Calu3 (cell line): ENCODE measurements at regions of chr21 and their contacts with region 1.

Region 1: GRCh38 chr21:14877570-14878228 is 187.1 kb downstream of the NRIP1 start:
- DNase-seq: peak; percentile 29
- H3K4me3 Mint-ChIP-seq: no peak overlapping the region
- H3K27ac Mint-ChIP-seq: peak overlapping the region; percentile 93
- H3K4me1 Mint-ChIP-seq: peaks cover 81% of the 10 kb centered on the region
- H3K27me3 Mint-ChIP-seq: no peaks in the 10 kb centered on the region
- CTCF ChIP-seq: no peak

Region 2: DNA sequence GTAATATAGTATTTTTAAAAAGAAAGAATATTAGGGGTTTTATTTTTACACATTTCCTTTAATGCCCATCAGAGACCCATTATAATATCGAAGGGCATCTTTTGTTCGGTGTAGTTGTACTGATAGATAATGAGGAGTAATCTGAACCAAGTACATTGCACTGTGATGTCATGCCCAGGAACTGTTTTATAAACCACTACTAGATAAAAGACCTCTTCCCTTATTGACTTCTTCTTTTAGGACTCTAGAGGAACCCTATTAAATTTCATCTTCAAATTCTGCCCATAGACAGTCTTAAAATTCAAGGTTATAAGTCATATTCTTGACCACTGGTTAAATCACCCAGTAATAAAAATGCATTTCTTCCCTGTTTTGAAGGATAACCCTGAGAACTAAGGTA is 19.4 kb before region 1 on chr21:
- CTCF ChIA-PET with region 1: no interaction called
- intact Hi-C with region 1: no loop called
- DNase-seq: no peak
- H3K4me3 Mint-ChIP-seq: no peak overlapping the region
- H3K27ac Mint-ChIP-seq: no peak overlapping the region
- H3K4me1 Mint-ChIP-seq: no peaks in the 10 kb centered on the region
- H3K27me3 Mint-ChIP-seq: no peaks in the 10 kb centered on the region
- CTCF ChIP-seq: no peak

Region 3: DNA sequence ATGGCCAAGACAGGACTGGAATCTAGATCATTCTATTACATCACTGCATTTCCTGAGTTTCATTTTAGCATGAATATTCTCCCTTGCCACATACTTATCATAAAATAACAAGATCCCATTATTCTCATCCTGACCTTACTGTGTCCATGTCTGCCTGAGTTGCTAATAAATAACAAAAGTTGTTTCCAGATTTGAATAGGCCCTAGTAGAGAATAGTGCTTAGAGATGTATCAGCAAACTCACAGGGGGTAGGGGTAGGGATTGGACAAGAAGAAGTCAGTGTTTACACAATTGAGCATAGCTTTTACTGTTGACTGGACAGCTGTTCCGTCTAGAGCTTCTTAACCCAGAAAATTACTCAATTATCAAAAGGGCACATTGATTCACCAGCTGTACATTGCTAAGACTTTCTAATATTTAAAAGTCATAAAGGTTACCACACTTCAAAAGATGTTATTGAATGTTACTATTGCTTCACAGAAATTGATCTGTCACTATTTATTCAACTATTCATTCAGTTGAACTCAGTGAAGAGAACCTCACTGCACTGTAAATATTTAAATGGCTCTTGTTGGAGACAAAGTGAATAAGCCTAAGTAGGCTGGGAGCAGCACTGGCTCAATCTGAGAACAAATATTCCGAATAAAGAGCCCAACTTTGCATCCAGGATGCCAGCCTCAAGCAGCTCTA is 65.2 kb after region 1 on chr21:
- CTCF ChIA-PET with region 1: no interaction called
- intact Hi-C with region 1: loop called (anchors 5 kb)
- DNase-seq: no peak
- H3K4me3 Mint-ChIP-seq: no peak overlapping the region
- H3K27ac Mint-ChIP-seq: peak overlapping the region; percentile 33
- H3K4me1 Mint-ChIP-seq: peaks cover 32% of the 10 kb centered on the region
- H3K27me3 Mint-ChIP-seq: no peaks in the 10 kb centered on the region
- CTCF ChIP-seq: no peak

Region 4: GRCh38 chr21:14956807-14957206 is 79.1 kb after region 1 on chr21:
- CTCF ChIA-PET with region 1: interaction called, 4 read pairs
- intact Hi-C with region 1: loop called (anchors 5 kb)
- DNase-seq: no peak
- H3K4me3 Mint-ChIP-seq: no peak overlapping the region
- H3K27ac Mint-ChIP-seq: peak overlapping the region; percentile 35
- H3K4me1 Mint-ChIP-seq: peaks cover 40% of the 10 kb centered on the region
- H3K27me3 Mint-ChIP-seq: no peaks in the 10 kb centered on the region
- CTCF ChIP-seq: no peak

Region 5: DNA sequence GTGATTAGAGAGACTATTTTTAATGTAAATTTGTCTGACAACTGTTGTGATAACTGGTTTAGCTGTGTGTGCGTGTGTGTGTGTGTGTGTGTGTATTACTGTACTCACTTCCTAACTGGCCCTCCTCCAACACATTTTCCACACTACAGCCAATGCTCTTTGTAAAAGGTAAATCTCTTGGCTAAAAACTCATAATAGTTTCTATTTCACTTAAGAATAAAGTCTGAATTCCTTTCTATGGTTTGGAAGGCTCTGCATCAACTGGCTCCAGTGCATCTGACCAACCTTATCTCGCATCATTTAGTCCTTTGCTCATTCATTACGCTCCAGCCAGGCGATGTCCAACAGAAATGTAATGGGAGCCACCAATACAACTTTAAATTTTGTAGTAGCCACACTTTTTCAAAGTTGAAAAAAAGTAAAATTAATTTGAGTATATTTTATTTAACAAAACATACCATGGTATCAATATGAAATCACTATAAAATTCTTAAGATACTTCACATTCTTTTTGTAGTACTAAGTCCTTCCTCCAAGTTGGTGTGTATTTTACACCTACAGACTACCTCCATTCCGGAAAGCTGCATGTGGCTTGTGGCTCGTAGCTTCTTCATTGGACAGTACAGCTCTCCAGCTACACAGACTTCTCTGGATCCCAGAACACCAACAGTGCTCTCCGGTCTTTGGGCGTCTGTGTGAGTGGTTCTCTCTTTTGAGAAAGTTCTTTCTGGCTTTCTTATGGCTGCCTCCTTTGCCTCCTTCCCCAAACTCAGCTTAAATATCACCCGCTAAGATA is 118.2 kb after region 1 on chr21:
- CTCF ChIA-PET with region 1: no interaction called
- intact Hi-C with region 1: loop called (anchors 5 kb)
- DNase-seq: peak; percentile 12
- H3K4me3 Mint-ChIP-seq: peak overlapping the region; percentile 66
- H3K27ac Mint-ChIP-seq: peak overlapping the region; percentile 82
- H3K4me1 Mint-ChIP-seq: peaks cover 27% of the 10 kb centered on the region
- H3K27me3 Mint-ChIP-seq: no peaks in the 10 kb centered on the region
- CTCF ChIP-seq: no peak

Region 6: DNA sequence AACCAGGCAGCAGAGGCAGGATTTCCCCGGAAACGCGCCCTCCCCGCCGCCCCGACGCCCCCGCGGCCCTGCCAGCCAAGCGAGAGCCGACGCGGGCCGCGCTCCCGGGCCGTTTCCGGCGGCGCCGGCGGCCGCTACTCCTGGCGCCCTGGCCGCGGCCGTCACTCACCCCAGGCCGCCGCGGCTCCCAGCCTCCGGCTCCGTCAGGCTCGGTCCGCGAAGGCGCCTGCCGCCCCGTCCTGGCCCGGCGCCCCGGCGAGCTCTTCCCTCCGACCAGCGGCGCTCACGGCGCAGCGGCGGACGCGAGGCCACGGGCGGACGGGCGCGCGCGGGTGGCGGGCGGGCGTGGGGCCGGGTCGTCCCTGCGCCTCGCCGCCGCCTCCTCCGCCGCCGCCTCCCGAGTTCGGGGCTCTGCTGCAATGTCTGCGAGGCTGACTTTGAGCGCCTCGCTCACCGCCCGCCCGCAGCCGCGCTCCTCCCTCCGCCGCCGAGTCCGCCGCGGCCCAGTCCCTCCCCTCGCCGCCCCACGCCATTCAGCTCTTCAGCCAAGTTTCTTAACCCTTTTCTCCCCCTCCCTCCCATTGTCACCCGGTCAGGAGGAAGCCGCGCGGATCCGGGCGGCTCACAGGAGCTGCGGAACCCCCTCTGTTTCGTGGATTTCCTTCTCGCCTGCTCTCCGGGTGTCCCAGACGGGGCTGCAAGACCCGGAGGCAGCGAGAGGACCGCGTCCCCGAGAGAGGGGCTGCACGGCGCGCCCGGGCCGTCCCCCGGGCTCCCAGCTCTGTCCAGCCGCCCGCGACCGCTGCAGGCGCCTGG is 187.1 kb after region 1 on chr21 and contains the start of gene NRIP1:
- CTCF ChIA-PET with region 1: no interaction called
- intact Hi-C with region 1: loop called (anchors 5 kb)
- DNase-seq: peak; percentile 83
- H3K4me3 Mint-ChIP-seq: peak within 1 kb of the TSS; percentile 72
- H3K27ac Mint-ChIP-seq: peak within 1 kb of the TSS; percentile 95
- H3K4me1 Mint-ChIP-seq: peaks cover 41% of the 10 kb centered on the region
- H3K27me3 Mint-ChIP-seq: no peaks in the 10 kb centered on the region
- CTCF ChIP-seq: no peak
- total RNA-seq, gene NRIP1: 58.7 TPM in 2 replicates

Region 7: DNA sequence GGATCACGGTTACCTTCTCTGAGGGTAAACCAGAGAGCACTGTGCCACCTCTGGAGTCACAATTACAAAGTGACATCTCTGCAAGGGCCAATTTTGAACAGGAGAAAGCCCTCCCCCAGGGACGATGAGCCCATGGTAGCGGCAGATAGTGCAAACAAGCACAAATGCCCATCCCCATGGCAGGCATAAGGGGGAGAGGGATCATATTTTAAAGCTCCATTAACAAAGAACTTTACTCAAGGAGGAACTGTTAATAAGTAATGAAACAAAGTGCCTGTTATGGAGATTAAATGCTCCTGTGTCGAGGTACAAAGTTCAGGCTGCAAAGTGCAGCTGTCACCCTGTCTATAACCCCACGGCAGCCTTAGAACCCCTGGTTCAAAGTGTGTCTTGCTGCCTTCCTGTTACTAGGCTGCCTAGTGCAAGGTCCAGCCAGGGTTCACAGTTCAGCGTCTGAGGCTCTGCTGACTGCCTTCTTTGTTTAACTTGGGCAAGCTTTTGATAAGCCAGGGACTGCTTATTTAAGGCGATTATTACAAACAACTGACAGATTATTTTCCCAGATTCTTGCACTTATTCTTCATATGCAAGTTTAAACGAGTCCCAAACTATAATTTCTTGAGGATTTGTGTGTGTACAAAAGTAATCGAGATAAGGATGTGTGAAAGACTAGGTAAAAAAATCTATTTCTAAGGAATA is 262.8 kb after region 1 on chr21:
- CTCF ChIA-PET with region 1: no interaction called
- intact Hi-C with region 1: loop called (anchors 2 kb)
- DNase-seq: peak; percentile 53
- H3K4me3 Mint-ChIP-seq: peak overlapping the region; percentile 62
- H3K27ac Mint-ChIP-seq: peak overlapping the region; percentile 80
- H3K4me1 Mint-ChIP-seq: peaks cover 58% of the 10 kb centered on the region
- H3K27me3 Mint-ChIP-seq: no peaks in the 10 kb centered on the region
- CTCF ChIP-seq: no peak

Region 8: GRCh38 chr21:15221799-15222386 is 344.2 kb after region 1 on chr21:
- CTCF ChIA-PET with region 1: no interaction called
- intact Hi-C with region 1: loop called (anchors 5 kb)
- DNase-seq: peak; percentile 6
- H3K4me3 Mint-ChIP-seq: no peak overlapping the region
- H3K27ac Mint-ChIP-seq: no peak overlapping the region
- H3K4me1 Mint-ChIP-seq: peaks cover 30% of the 10 kb centered on the region
- H3K27me3 Mint-ChIP-seq: no peaks in the 10 kb centered on the region
- CTCF ChIP-seq: no peak